Sciatic nerve (tissue), 2 donors: ENCODE measurements at regions of chr3 and their contacts with region 1.

Region 1: GRCh38 chr3:38743043-38743442 is 73.0 kb downstream of the SCN10A start:
- DNase-seq: no peak
- ATAC-seq: no peak

Region 2: GRCh38 chr3:38616111-38616510 is 126.9 kb before region 1 on chr3:
- intact Hi-C with region 1: no loop called
- DNase-seq: peak; percentile 15
- ATAC-seq: no peak

Region 3: GRCh38 chr3:38758557-38758956 is 15.5 kb after region 1 on chr3:
- intact Hi-C with region 1: loop called (anchors 1 kb)
- DNase-seq: no peak
- ATAC-seq: no peak

Region 4: DNA sequence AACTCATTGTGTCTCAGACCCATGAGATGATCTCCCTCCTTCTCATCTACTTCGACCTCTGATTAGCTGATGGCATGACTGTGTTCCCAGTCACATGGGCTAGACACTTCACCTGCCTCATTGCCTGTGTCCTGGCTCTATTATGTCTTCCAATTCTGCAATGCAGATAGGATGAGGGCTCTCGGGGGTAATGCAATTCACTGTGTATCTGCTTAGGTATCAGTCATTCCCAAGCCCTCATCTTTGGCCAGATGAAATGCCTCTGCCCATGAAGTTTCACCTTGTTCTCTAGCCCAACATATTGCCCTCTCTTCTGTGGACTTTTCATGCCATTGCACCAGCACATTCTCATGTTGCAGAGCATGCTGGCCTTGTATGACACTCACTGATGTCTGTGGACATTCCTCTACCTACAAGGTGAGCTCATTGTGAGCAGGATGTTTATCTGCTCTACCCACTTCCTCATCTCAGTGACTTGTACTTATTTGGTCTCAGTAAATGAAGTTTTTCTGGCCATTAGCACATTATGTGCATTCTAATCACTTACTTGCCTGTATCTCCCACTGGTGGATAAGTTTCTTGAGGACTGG is 756.7 kb after region 1 on chr3:
- intact Hi-C with region 1: no loop called
- DNase-seq: no peak
- ATAC-seq: no peak